ENCODE measurements at regions of chr7 and their contacts with region 1.

Region 1: DNA sequence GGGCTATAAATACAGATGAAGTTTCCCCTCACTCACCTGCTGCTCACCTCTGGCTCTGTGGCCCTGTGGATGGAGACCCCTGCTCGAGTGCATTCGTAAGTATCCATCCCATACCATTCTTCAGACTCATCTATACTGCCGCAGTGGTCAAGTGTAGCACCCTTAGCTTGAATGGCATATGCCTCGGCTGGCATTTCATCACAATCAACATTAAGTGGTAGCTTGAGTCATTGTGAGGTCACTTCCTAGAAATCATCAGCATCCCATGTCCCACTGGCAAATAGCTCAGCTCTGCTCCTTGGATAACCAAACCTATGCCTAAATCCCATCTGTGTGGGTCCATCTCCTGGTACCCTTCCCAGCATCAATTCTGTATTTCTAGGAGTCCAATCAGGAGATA is 38.2 kb downstream of the MDH2 start:
- DNase-seq: peak; percentile 49
- H3K4me3 ChIP-seq: no peak overlapping the region
- H3K27ac ChIP-seq: peak overlapping the region; percentile 55
- H3K4me1 ChIP-seq: peaks cover 20% of the 10 kb centered on the region
- H3K27me3 ChIP-seq: no peaks in the 10 kb centered on the region
- CTCF ChIP-seq: no peak
- POLR2A ChIP-seq: no peak

Region 2: DNA sequence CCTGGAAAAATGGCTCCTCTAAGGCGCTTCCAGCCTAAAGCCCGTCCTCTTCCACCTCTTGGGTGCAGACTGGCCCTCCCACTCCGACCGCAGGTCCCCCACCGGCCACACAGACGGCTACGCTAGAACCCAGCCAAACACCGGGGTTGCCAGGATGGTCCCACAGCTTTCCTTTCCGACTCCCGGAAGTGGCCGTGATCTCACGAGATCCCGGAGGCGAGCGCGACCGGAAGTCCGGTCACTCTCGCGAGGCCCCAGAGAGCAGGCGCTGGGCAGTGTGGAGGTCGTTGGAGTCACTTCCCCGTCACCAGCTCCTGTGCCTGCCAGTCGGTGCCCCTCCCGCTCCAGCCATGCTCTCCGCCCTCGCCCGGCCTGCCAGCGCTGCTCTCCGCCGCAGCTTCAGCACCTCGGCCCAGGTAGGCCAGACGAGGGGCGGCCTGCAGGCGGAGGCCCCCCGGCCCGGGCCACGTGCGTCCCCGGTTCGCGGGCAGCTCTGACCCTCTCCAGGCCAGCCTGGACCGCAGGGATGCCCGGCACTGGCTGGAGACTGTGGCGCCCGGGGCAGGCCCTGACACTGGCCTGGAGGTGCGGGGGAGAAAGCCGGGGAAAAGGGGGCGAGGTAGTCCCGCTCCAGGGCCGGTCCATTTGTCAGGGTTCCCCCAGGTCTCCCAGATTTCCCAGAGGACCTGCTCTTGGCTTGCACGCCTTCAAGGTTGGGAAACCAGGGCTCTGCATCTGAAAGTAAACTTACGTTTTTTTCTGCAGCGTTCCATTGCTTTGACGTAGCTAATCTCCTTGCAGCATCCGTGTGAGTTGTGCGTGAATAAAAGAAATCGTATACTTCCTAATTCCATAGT is 38.0 kb before region 1 on chr7 and contains the starts of genes MDH2 and STYXL1:
- CTCF ChIA-PET with region 1: interaction called, 3 read pairs
- POLR2A ChIA-PET with region 1: no interaction called
- dilution Hi-C with region 1: no loop called
- intact Hi-C with region 1: loop called (anchors 2 kb)
- DNase-seq: peak; percentile 97
- H3K4me3 ChIP-seq: peak within 1 kb of the TSS; percentile 79 to 98 (median 94)
- H3K27ac ChIP-seq: peak within 1 kb of the TSS; percentile 63
- H3K4me1 ChIP-seq: peaks cover 4% of the 10 kb centered on the region
- H3K27me3 ChIP-seq: no peaks in the 10 kb centered on the region
- CTCF ChIP-seq: no peak
- POLR2A ChIP-seq: peak; percentile 87
- total RNA-seq, gene MDH2: 168 and 175 TPM in 2 replicates
- total RNA-seq, gene STYXL1: 23.0 and 24.3 TPM in 2 replicates

Region 3: DNA sequence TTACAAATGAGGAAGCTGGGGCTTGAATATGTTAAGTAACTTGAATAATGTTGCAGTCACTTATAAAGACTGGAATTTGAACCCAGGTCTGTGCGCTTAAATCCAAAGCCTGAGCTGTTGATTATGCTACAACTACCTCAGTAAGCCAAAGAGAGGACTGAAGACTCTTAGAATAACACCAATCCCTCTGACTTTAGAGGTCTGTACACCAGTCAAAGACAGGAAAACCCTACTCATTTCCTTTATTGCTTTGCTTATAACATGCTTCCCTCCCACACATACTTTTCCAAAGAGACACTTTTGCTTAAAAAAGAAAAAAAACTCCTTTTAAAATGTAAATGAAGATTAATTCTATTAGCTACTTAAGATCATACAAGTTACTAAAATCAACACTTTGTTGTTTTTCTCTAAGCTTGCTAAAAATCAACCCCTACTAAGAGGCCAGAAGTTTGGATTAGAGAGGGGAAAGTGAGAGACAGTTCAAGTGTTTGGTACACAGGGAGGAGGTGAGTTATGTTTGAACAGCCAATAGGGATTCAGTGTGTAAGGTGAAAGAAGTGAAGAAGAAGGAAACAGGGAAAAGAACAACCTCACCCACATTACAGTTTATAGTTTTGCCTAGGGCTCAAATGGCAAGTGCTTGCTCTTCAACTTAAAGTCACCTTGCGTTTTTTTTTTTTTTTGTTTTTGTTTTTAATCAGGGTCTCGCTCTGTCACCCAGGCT is 36.6 kb after region 1 on chr7:
- CTCF ChIA-PET with region 1: no interaction called
- POLR2A ChIA-PET with region 1: interaction called, 3 read pairs
- dilution Hi-C with region 1: no loop called
- intact Hi-C with region 1: loop called (anchors 5 kb)
- DNase-seq: peak; percentile 78
- H3K4me3 ChIP-seq: no peak overlapping the region
- H3K27ac ChIP-seq: peak overlapping the region; percentile 23
- H3K4me1 ChIP-seq: peaks cover 6% of the 10 kb centered on the region
- H3K27me3 ChIP-seq: no peaks in the 10 kb centered on the region
- CTCF ChIP-seq: no peak
- POLR2A ChIP-seq: no peak